ENCODE measurements at regions of chr3 and their contacts with region 1.

Region 1: DNA sequence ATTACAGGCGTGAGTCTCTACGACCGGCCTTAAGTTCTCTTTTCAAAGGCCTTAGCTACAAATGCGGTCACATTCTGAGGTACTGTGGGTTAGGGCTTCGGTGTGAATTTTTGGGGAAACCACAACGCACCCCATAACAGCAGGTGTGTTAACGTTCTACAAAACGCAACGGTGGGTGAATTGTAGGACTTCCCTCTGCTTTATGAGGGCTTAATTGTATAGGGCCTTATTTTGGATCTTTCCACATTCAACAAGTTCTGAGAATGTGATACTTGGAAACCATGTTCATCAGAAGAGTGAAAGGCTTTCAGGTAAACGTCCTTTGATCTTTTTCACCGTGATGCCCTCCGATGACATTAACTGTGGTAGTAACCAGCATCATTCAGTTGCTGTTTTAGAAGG is 998.6 kb upstream of the CFAP20DC start:
- DNase-seq: peak; percentile 65
- ATAC-seq: peak; percentile 76
- H3K4me3 Mint-ChIP-seq: peak overlapping the region; percentile 64
- H3K27ac Mint-ChIP-seq: peak overlapping the region; percentile 89
- H3K4me1 Mint-ChIP-seq: peaks cover 81% of the 10 kb centered on the region
- H3K27me3 Mint-ChIP-seq: no peaks in the 10 kb centered on the region

Region 2: DNA sequence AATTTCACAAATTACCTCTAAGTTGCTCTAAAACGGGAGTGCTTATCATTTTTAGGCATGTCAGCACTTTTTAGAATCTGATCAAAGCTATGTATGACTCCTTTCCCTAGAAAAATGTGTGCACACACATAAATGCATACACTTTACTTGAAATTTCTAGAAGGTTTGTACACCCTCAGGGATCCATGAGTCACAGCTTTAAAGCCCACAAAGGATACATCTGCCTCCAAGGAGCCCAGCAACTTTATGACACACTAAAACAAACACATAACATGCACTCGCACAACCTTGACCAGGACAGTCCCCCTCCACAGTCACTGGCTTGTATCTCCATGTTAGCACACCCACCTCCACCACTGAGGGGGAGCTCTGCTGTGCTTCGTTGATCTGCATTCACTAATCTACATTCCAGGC is 276.7 kb before region 1 on chr3:
- CTCF ChIA-PET with region 1: no interaction called
- POLR2A ChIA-PET with region 1: no interaction called
- intact Hi-C with region 1: no loop called
- DNase-seq: peak; percentile 10
- ATAC-seq: peak; percentile 40
- H3K4me3 Mint-ChIP-seq: no peak overlapping the region
- H3K27ac Mint-ChIP-seq: no peak overlapping the region
- H3K4me1 Mint-ChIP-seq: peaks cover 39% of the 10 kb centered on the region
- H3K27me3 Mint-ChIP-seq: peaks cover 2% of the 10 kb centered on the region

Region 3: GRCh38 chr3:60025096-60026050 is 23.1 kb before region 1 on chr3:
- CTCF ChIA-PET with region 1: interaction called, 4 read pairs
- POLR2A ChIA-PET with region 1: no interaction called
- intact Hi-C with region 1: loop called (anchors 1 to 2 kb)
- DNase-seq: no peak
- ATAC-seq: no peak
- H3K4me3 Mint-ChIP-seq: no peak overlapping the region
- H3K27ac Mint-ChIP-seq: peak overlapping the region; percentile 70
- H3K4me1 Mint-ChIP-seq: peaks cover 87% of the 10 kb centered on the region
- H3K27me3 Mint-ChIP-seq: no peaks in the 10 kb centered on the region

Region 4: GRCh38 chr3:60935709-60936108 is 887.3 kb after region 1 on chr3:
- CTCF ChIA-PET with region 1: no interaction called
- POLR2A ChIA-PET with region 1: no interaction called
- intact Hi-C with region 1: no loop called
- DNase-seq: no peak
- ATAC-seq: no peak
- H3K4me3 Mint-ChIP-seq: no peak overlapping the region
- H3K27ac Mint-ChIP-seq: no peak overlapping the region
- H3K4me1 Mint-ChIP-seq: peaks cover 4% of the 10 kb centered on the region
- H3K27me3 Mint-ChIP-seq: no peaks in the 10 kb centered on the region